HEK293 (cell line): ENCODE measurements at regions of chr19 and their contacts with region 1.

Region 1: GRCh38 chr19:46030812-46031550 is 8.1 kb upstream of the PGLYRP1 start:
- H3K4me3 ChIP-seq: no peak overlapping the region
- H3K27ac ChIP-seq: no peak overlapping the region
- H3K4me1 ChIP-seq: peaks cover 8% of the 10 kb centered on the region; the same call in 1 of the 2 replicates
- CTCF ChIP-seq: no peak

Region 2: GRCh38 chr19:46192992-46193650 is 162.1 kb after region 1 on chr19:
- CTCF ChIA-PET with region 1: interaction called, 14 read pairs
- POLR2A ChIA-PET with region 1: no interaction called
- H3K4me3 ChIP-seq: no peak overlapping the region
- H3K27ac ChIP-seq: no peak overlapping the region; the same call in 1 of the 2 replicates
- H3K4me1 ChIP-seq: peaks cover 10% of the 10 kb centered on the region
- CTCF ChIP-seq: no peak